Heart left ventricle (tissue), 16 donors: ENCODE measurements at regions of chr2 and their contacts with region 1.

Region 1: DNA sequence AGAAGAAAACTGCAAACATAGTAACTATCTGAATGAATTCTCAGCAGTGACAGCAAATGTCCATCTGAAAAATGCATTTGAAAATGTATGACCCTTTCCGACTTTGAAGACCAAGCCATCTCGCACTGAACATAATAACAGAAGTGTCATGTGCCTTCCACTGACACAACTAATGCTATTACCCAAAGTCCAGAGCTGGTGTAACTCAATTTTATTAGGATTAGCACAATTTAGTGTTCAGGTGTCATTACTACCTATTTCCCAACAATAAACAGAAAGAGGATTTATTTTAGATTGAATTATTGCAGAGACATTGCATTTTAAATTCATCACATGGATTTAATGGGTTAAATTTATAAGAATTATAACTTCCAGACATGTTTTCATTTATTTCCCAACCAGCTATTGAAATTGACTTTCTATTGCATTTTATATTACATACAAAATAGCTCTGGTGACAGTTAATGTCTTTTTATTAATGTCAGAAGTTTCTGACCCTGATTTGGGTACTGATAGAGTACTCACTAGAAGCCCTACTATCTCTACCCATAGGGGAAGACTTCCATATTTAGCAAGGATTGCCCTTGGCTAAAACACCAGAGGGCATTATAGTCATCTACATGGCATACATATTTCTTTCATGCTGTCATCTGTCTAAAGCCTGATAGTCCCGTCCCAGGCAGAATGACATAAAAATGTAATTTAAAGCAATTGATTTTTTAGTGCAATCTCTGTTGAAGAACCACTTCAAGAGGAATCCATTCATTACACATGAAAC is 7.0 kb upstream of the STK39 start:
- DNase-seq: no peak
- ATAC-seq: peak; percentile 69 to 88 (median 82)
- H3K4me3 ChIP-seq: no peak overlapping the region
- H3K27ac ChIP-seq: peak overlapping the region in 5 of 12 donors; percentile 23 to 64 (median 52)
- H3K4me1 ChIP-seq: peaks cover 0 to 12% (median 0%) of the 10 kb centered on the region in 12 donors
- H3K27me3 ChIP-seq: no peaks in the 10 kb centered on the region
- CTCF ChIP-seq: peak in 2 of 12 donors; percentile 9 to 13
- POLR2A ChIP-seq: no peak

Region 2: DNA sequence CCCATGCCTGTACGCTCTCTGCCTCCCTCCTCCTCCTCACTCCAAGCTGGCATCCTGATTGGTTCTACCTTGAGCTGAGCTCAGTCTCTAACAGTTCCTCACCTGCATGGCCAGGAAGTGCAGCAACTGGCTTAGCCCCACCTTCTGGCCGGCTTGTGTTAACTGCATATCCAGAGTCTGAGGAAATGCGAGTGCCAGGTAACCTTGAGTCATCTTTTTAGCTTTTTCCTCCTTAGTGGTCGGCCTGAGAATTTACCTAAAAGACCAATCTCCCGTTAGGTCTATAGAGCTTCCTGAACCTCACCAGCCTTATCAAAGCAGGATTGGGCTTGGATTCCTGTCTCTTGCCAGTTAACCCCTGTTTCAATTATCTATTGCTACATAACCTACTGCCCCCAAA is 82.5 kb after region 1 on chr2:
- intact Hi-C with region 1: loop called in 3 of 10 experiments (anchors 5 to 10 kb)
- DNase-seq: peak in 1 of 5 donors; percentile 29
- ATAC-seq: peak in 3 of 4 donors; percentile 59 to 76 (median 64)
- H3K4me3 ChIP-seq: no peak overlapping the region
- H3K27ac ChIP-seq: no peak overlapping the region
- H3K4me1 ChIP-seq: no peaks in the 10 kb centered on the region
- H3K27me3 ChIP-seq: peaks cover 0 to 2% (median 0%) of the 10 kb centered on the region in 9 donors
- CTCF ChIP-seq: peak in 10 of 12 donors; percentile 22 to 44 (median 33)
- POLR2A ChIP-seq: no peak